ENCODE measurements at regions of chr6 and their contacts with region 1.

Region 1: GRCh38 chr6:160750276-160750689 is 48.2 kb downstream of the PLG start:
- DNase-seq: peak; percentile 41 to 65 (median 45)
- ATAC-seq: peak; percentile 91
- H3K4me3 ChIP-seq: no peak overlapping the region
- H3K27ac ChIP-seq: no peak overlapping the region
- H3K4me1 ChIP-seq: no peaks in the 10 kb centered on the region; a peak in 1 of 5 replicates
- H3K27me3 ChIP-seq: no peaks in the 10 kb centered on the region
- CTCF ChIP-seq: peak; percentile 73 to 92 (median 80)
- EP300 ChIP-seq: no peak
- POLR2A ChIP-seq: no peak
- RAD21 ChIP-seq: peak; percentile 69 to 82

Region 2: DNA sequence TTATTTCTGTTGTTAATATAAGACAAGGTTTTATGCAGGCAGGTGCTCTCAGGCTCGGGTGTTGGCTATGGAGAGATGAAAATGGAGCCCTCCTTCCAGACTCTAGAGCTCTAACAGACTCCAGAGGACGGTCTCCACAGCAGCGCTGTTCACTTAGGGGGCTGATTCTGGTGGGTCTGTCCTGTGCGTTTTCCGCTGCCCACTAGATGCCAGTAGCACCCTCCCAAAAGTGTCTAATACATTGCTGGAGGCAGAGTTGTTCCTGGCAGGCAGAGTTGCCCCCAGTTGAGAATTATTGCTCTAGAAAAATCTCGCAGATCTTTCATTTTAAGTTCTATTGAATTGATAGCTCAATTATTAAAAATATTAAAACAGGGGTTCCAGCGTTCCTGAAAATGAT is 351.2 kb after region 1 on chr6:
- CTCF ChIA-PET with region 1: interaction called, 3 read pairs
- POLR2A ChIA-PET with region 1: no interaction called
- in situ Hi-C with region 1: no loop called
- intact Hi-C with region 1: loop called (anchors 5 kb)
- DNase-seq: peak in 1 of 4 experiments; percentile 32
- ATAC-seq: peak; percentile 80
- H3K4me3 ChIP-seq: no peak overlapping the region
- H3K27ac ChIP-seq: no peak overlapping the region
- H3K4me1 ChIP-seq: 0 out of 5 replicates have a peak, but pooled peaks cover 0 to 3% of the 10 kb centered on the region in 2 experiments
- H3K27me3 ChIP-seq: no peaks in the 10 kb centered on the region
- CTCF ChIP-seq: peak; percentile 52 to 64 (median 62)
- EP300 ChIP-seq: no peak
- POLR2A ChIP-seq: no peak
- RAD21 ChIP-seq: peak; percentile 45 to 65

Region 3: GRCh38 chr6:162290846-162291465 is 1540.7 kb after region 1 on chr6:
- CTCF ChIA-PET with region 1: no interaction called
- POLR2A ChIA-PET with region 1: no interaction called
- in situ Hi-C with region 1: no loop called
- intact Hi-C with region 1: no loop called
- DNase-seq: no peak
- ATAC-seq: no peak
- H3K4me3 ChIP-seq: no peak overlapping the region
- H3K27ac ChIP-seq: no peak overlapping the region
- H3K4me1 ChIP-seq: no peaks in the 10 kb centered on the region
- H3K27me3 ChIP-seq: no peaks in the 10 kb centered on the region
- CTCF ChIP-seq: no peak
- EP300 ChIP-seq: no peak
- POLR2A ChIP-seq: no peak
- RAD21 ChIP-seq: no peak